ENCODE measurements at regions of chr5 and their contacts with region 1.

Region 1: GRCh38 chr5:43040287-43041098 is at the start of gene ANXA2R:
- DNase-seq: peak; percentile 75 to 85 (median 77)
- H3K4me3 ChIP-seq: peak within 1 kb of the TSS; percentile 61
- H3K27ac ChIP-seq: peak within 1 kb of the TSS in 1 of 2 donors; percentile 92
- H3K4me1 ChIP-seq: no peaks in the 10 kb centered on the region
- H3K27me3 ChIP-seq: no peaks in the 10 kb centered on the region
- CTCF ChIP-seq: peak; percentile 54 to 64 (median 58)
- EP300 ChIP-seq: no peak
- POLR2A ChIP-seq: no peak
- total RNA-seq, gene ANXA2R: 1.1 to 2.7 (median 1.7) TPM

Region 2: DNA sequence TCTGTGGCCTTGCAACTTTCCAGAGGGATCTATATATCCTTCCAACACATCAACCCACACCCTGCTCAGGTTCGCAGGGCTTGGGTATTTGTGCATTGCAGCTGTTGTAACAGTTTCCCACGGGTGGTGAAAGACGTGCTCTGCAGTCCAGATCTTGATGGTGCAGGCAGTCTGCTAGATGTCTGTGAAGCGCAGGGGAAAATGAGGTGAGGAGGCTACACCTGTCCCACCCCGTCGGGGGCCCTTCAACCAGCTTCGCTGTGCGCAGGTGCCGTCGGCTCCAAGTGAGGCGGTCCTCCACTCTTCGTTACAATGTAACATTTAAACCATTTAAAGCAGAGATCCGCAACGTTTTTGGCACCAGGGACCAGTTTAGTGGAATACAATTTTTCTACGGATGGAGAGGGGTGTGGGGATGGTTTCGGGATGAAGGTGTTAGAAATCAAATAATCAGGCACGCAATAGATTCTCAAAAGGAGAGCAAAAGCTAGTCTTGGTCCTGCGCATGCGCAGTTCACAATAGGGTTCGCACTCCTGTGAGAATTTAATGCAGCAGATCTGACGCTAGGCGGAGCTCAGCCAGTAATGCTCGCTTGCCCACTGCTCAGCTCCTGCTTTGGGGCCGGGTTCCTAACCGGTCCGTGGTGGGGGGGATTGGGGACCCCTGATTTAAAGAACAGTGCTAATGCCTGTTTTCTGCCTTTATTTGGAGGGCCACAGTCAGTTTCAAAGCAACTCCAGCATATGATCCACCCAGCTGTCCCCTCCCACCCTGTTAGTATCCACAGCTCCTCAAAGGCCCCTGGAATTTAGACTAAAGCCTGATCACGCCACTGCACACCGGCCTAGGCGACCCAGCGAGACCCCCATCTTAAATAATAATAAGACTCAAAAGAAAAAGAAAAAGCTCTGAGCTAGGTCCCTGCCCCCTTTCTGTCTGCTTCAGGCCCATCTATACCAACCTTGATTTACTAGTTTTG is 131.7 kb before region 1 on chr5:
- intact Hi-C with region 1: loop called in 2 of 4 experiments (anchors 5 to 10 kb)
- DNase-seq: peak; percentile 83 to 90 (median 88)
- H3K4me3 ChIP-seq: peak overlapping the region; percentile 31
- H3K27ac ChIP-seq: no peak overlapping the region
- H3K4me1 ChIP-seq: peaks cover 2% of the 10 kb centered on the region
- H3K27me3 ChIP-seq: no peaks in the 10 kb centered on the region
- CTCF ChIP-seq: peak; percentile 59 to 82 (median 61)
- EP300 ChIP-seq: no peak
- POLR2A ChIP-seq: no peak

Region 3: GRCh38 chr5:42994246-42995151 is 46.0 kb before region 1 on chr5:
- intact Hi-C with region 1: loop called in 2 of 4 experiments (anchors 2 to 5 kb)
- DNase-seq: peak; percentile 80 to 88 (median 82)
- H3K4me3 ChIP-seq: peak overlapping the region; percentile 21
- H3K27ac ChIP-seq: peak overlapping the region in 1 of 2 donors; percentile 8
- H3K4me1 ChIP-seq: peaks cover 6% of the 10 kb centered on the region
- H3K27me3 ChIP-seq: no peaks in the 10 kb centered on the region
- CTCF ChIP-seq: peak; percentile 70 to 79 (median 76)
- EP300 ChIP-seq: no peak
- POLR2A ChIP-seq: no peak

Region 4: GRCh38 chr5:43008369-43009153 is 31.9 kb before region 1 on chr5:
- intact Hi-C with region 1: loop called in 1 of 4 experiments (anchors 5 kb)
- DNase-seq: peak; percentile 84 to 89 (median 86)
- H3K4me3 ChIP-seq: peak overlapping the region; percentile 41
- H3K27ac ChIP-seq: peak overlapping the region; percentile 1 to 82
- H3K4me1 ChIP-seq: peaks cover 2% of the 10 kb centered on the region
- H3K27me3 ChIP-seq: no peaks in the 10 kb centered on the region
- CTCF ChIP-seq: peak in 1 of 3 donors; percentile 7
- EP300 ChIP-seq: no peak
- POLR2A ChIP-seq: peak; percentile 59

Region 5: DNA sequence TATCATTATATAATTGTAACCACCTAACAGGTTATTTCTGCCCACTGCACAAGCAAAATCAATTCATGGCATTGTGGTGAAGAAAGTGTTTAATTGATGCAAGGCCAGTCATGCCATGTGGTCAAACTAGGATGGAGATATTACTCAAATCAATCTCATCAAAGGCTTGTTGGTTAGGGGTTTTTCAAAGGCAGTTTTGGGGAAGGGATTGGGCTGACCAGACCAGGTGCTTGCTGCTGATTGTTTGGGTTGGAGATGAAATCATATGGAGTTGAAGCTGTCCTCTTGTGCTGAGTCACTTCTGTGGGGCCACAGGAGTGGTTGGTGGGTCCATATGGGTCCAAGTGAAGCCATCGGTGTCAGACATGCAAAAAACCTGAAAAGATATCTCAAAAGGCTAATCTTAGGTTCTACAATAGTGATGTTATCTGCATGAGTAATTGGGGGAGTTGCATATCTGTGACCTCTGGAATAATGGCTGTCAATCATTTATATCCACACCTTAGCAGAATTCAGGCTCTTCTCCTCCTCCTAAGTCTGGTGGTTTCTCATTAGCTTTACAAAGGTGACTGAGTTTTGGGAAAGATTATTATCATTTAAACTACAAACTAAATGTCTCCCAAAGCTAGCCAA is 227.8 kb after region 1 on chr5:
- intact Hi-C with region 1: no loop called
- DNase-seq: no peak
- H3K4me3 ChIP-seq: no peak overlapping the region
- H3K27ac ChIP-seq: no peak overlapping the region
- H3K4me1 ChIP-seq: no peaks in the 10 kb centered on the region
- H3K27me3 ChIP-seq: no peaks in the 10 kb centered on the region
- CTCF ChIP-seq: no peak
- EP300 ChIP-seq: no peak
- POLR2A ChIP-seq: no peak